IMR-90 (cell line): ENCODE measurements at regions of chr2 and their contacts with region 1.

Region 1: GRCh38 chr2:9205963-9206948 is at the start of gene ASAP2:
- DNase-seq: peak; percentile 68
- ATAC-seq: peak; percentile 88
- H3K4me3 ChIP-seq: peak within 1 kb of the TSS; percentile 96
- H3K27ac ChIP-seq: peak within 1 kb of the TSS; percentile 80
- H3K4me1 ChIP-seq: peaks cover 6% of the 10 kb centered on the region
- H3K27me3 ChIP-seq: no peaks in the 10 kb centered on the region
- CTCF ChIP-seq: peak; percentile 77
- POLR2A ChIP-seq: peak; percentile 73; the same call in 1 of the 2 replicates
- RAD21 ChIP-seq: peak; percentile 69
- total RNA-seq, gene ASAP2: 19.7 and 26.9 TPM in 2 replicates

Region 2: GRCh38 chr2:9234680-9235387 is 28.6 kb after region 1 on chr2:
- CTCF ChIA-PET with region 1: interaction called, 3 read pairs
- POLR2A ChIA-PET with region 1: interaction called, 3 read pairs
- dilution Hi-C with region 1: no loop called
- in situ Hi-C with region 1: no loop called
- intact Hi-C with region 1: loop called (anchors 2 kb)
- DNase-seq: peak; percentile 95
- ATAC-seq: peak; percentile 72
- H3K4me3 ChIP-seq: no peak overlapping the region
- H3K27ac ChIP-seq: peak overlapping the region; percentile 95
- H3K4me1 ChIP-seq: peaks cover 62% of the 10 kb centered on the region
- H3K27me3 ChIP-seq: no peaks in the 10 kb centered on the region
- CTCF ChIP-seq: no peak
- POLR2A ChIP-seq: no peak
- RAD21 ChIP-seq: no peak

Region 3: GRCh38 chr2:9287400-9288043 is 81.3 kb after region 1 on chr2:
- CTCF ChIA-PET with region 1: interaction called, 3 read pairs
- POLR2A ChIA-PET with region 1: no interaction called
- dilution Hi-C with region 1: no loop called
- in situ Hi-C with region 1: no loop called
- intact Hi-C with region 1: loop called (anchors 5 kb)
- DNase-seq: peak; percentile 99
- ATAC-seq: peak; percentile 83
- H3K4me3 ChIP-seq: no peak overlapping the region
- H3K27ac ChIP-seq: peak overlapping the region; percentile 94
- H3K4me1 ChIP-seq: peaks cover 19% of the 10 kb centered on the region
- H3K27me3 ChIP-seq: no peaks in the 10 kb centered on the region
- CTCF ChIP-seq: peak; percentile 24; the same call in 1 of the 2 replicates
- POLR2A ChIP-seq: no peak
- RAD21 ChIP-seq: no peak

Region 4: GRCh38 chr2:9333591-9334171 is 127.4 kb after region 1 on chr2:
- CTCF ChIA-PET with region 1: interaction called, 4 read pairs
- POLR2A ChIA-PET with region 1: no interaction called
- dilution Hi-C with region 1: no loop called
- in situ Hi-C with region 1: loop called (anchors 10 kb)
- intact Hi-C with region 1: loop called (anchors 1 kb)
- DNase-seq: peak; percentile 91
- ATAC-seq: peak; percentile 72
- H3K4me3 ChIP-seq: no peak overlapping the region
- H3K27ac ChIP-seq: no peak overlapping the region
- H3K4me1 ChIP-seq: peaks cover 10% of the 10 kb centered on the region
- H3K27me3 ChIP-seq: no peaks in the 10 kb centered on the region
- CTCF ChIP-seq: peak; percentile 85
- POLR2A ChIP-seq: no peak
- RAD21 ChIP-seq: peak; percentile 89

Region 5: DNA sequence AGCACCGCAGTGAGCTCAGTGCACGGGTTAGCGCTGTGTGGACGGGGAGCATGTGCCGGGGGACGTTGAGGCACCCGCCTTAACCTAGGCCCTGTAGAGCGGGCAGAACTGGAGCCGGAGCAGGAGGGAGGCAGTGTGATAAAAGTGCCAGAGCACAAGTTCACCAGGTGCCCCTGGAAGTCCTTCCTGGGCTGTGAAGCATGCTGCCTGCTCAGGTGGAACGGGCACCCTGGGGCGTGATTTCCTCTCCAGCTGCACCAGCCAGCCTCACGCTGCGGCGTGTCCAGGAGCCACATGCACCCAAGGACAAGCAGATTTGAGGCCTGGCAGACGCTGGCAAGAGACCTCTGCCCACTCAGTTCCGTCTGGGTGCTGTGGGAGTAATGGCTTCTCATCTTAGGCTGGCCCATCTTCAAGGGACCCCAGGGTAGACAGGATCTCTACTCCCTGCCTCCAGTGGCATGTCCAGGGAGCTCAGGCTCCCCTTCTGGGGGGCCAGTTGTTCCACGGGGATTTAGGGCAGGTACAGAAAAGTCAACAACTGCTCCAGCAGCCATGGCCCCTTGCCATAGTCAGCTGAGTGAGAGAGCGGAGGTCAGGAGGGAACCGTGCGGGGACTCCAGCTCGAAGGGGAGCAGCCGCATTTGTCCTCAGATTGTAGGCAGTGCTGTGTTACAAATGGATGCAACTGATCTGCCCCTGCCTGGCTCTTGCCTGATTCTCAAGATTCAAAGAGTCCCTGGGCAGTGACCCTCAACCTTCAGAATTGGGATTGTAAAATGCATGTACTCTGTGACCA is 167.0 kb after region 1 on chr2:
- CTCF ChIA-PET with region 1: interaction called, 3 read pairs
- POLR2A ChIA-PET with region 1: no interaction called
- dilution Hi-C with region 1: no loop called
- in situ Hi-C with region 1: no loop called
- intact Hi-C with region 1: loop called (anchors 5 kb)
- DNase-seq: no peak
- ATAC-seq: no peak
- H3K4me3 ChIP-seq: no peak overlapping the region
- H3K27ac ChIP-seq: no peak overlapping the region
- H3K4me1 ChIP-seq: peaks cover 19% of the 10 kb centered on the region
- H3K27me3 ChIP-seq: no peaks in the 10 kb centered on the region
- CTCF ChIP-seq: no peak
- POLR2A ChIP-seq: no peak
- RAD21 ChIP-seq: no peak

Region 6: GRCh38 chr2:9423100-9423921 is 217.1 kb after region 1 on chr2 and contains the starts of genes CPSF3 and ITGB1BP1:
- CTCF ChIA-PET with region 1: no interaction called
- POLR2A ChIA-PET with region 1: no interaction called
- dilution Hi-C with region 1: no loop called
- in situ Hi-C with region 1: no loop called
- intact Hi-C with region 1: loop called (anchors 5 kb)
- DNase-seq: peak; percentile 97
- ATAC-seq: peak; percentile 92
- H3K4me3 ChIP-seq: peak within 1 kb of the TSS; percentile 90
- H3K27ac ChIP-seq: peak within 1 kb of the TSS; percentile 95
- H3K4me1 ChIP-seq: peaks cover 12% of the 10 kb centered on the region
- H3K27me3 ChIP-seq: no peaks in the 10 kb centered on the region
- CTCF ChIP-seq: no peak
- POLR2A ChIP-seq: peak; percentile 50
- RAD21 ChIP-seq: 0 out of 2 replicates have a peak, but pooled peaks have one; percentile 4
- total RNA-seq, gene CPSF3: 64.5 and 72.8 TPM in 2 replicates
- total RNA-seq, gene ITGB1BP1: 48.6 and 61.1 TPM in 2 replicates